Breast epithelium (tissue), 4 donors: ENCODE measurements at regions of chr15 and their contacts with region 1.

Region 1: DNA sequence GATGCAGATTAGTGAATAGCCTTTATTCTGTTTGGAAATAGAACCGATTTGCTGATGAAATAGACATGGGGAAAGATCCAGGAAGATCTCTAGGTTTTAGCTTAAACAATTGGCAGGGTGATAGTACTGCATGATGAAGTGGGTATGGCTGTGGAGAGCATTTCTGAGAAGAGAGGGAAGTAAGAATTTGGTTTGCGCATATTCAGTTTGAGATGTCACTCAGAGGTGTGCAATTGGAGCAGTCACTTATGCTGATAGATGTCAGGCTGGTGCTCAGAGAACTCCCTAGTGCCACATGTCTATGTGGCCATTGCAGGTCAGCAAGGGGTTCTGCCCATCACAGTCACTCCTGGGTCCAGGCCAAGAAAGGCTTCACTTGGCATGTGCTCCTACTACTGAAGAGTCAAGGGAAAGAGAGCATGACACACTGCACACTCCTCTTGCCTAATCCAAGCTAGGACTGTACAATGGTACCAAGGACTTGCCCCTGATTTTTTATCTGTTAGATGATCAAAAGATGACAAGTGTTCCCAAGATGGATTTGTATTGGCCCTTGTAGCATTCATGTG is 57.2 kb upstream of the ST8SIA2 start:
- DNase-seq: no peak
- H3K4me3 ChIP-seq: no peak overlapping the region
- H3K27ac ChIP-seq: no peak overlapping the region
- H3K4me1 ChIP-seq: no peaks in the 10 kb centered on the region
- H3K27me3 ChIP-seq: peaks cover 0 to 4% of the 10 kb centered on the region in 2 donors
- CTCF ChIP-seq: no peak
- POLR2A ChIP-seq: no peak

Region 2: GRCh38 chr15:92091155-92091734 is 245.3 kb before region 1 on chr15:
- intact Hi-C with region 1: no loop called
- DNase-seq: peak in 1 of 2 donors; percentile 57
- H3K4me3 ChIP-seq: no peak overlapping the region
- H3K27ac ChIP-seq: no peak overlapping the region
- H3K4me1 ChIP-seq: no peaks in the 10 kb centered on the region
- H3K27me3 ChIP-seq: no peaks in the 10 kb centered on the region
- CTCF ChIP-seq: peak in 1 of 3 donors; percentile 44
- POLR2A ChIP-seq: no peak

Region 3: GRCh38 chr15:92383519-92384326 is 47.2 kb after region 1 on chr15:
- intact Hi-C with region 1: no loop called
- DNase-seq: no peak
- H3K4me3 ChIP-seq: no peak overlapping the region
- H3K27ac ChIP-seq: no peak overlapping the region
- H3K4me1 ChIP-seq: no peaks in the 10 kb centered on the region
- H3K27me3 ChIP-seq: peaks cover 0 to 8% of the 10 kb centered on the region in 2 donors
- CTCF ChIP-seq: no peak
- POLR2A ChIP-seq: no peak

Region 4: GRCh38 chr15:92831655-92832328 is 495.3 kb after region 1 on chr15:
- intact Hi-C with region 1: no loop called
- DNase-seq: peak; percentile 82 to 94
- H3K4me3 ChIP-seq: peak overlapping the region; percentile 18 to 52 (median 39)
- H3K27ac ChIP-seq: peak overlapping the region; percentile 92 to 95
- H3K4me1 ChIP-seq: peaks cover 6% of the 10 kb centered on the region in 2 donors
- H3K27me3 ChIP-seq: no peaks in the 10 kb centered on the region
- CTCF ChIP-seq: no peak
- POLR2A ChIP-seq: peak; percentile 45

Region 5: GRCh38 chr15:93987111-93987467 is 1650.6 kb after region 1 on chr15:
- intact Hi-C with region 1: loop called (anchors 5 kb)
- DNase-seq: no peak
- H3K4me3 ChIP-seq: no peak overlapping the region
- H3K27ac ChIP-seq: peak overlapping the region in 1 of 2 donors; percentile 12
- H3K4me1 ChIP-seq: no peaks in the 10 kb centered on the region
- H3K27me3 ChIP-seq: no peaks in the 10 kb centered on the region
- CTCF ChIP-seq: no peak
- POLR2A ChIP-seq: no peak